ENCODE measurements at regions of chr1 and their contacts with region 1.

Region 1: DNA sequence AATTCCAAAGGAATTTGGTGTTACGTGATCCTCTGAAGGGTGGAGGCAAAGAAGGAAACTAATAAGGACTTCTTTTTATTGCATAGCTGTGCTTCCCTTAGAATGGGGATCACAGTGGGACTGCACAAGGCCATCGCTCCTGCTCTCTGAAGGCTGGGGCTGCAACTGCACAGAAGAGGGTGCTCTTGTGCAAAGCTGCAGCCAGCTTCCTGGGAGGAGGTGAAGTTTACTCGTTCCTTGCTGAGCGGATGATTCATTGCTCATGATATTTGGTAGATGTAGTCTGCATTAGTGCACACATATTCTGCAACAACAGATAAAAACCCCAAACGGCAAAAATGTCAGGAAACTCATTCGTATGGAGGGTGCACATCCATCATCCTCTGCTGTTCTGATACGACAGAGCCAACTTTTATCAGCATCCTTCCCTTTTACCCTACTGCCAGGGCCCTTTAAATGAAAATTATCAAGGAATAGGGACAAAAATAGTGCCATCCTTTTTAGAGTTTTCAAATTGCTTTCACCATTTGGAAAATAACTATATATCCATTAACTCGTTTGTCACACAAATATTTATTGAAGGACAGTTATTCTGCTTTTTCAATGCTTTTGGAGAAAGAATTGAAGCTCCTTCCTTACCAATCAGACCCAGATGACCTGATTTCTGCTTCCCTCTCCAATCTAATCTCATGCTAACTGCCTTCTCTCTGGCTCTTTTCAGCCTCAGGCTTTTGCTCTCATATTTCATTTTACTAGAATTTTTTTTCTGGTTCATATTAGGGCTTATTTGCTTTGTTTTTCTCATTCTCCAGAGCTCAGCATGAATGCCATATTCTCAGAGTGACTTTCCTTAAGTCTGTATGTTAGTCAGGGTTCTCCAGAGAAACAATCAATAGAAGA is 263.6 kb downstream of the DUSP10 start:
- DNase-seq: peak; percentile 96
- H3K4me3 Mint-ChIP-seq: no peak overlapping the region
- H3K27ac Mint-ChIP-seq: no peak overlapping the region
- H3K4me1 Mint-ChIP-seq: no peaks in the 10 kb centered on the region
- H3K27me3 Mint-ChIP-seq: no peaks in the 10 kb centered on the region
- CTCF ChIP-seq: peak; percentile 99

Region 2: DNA sequence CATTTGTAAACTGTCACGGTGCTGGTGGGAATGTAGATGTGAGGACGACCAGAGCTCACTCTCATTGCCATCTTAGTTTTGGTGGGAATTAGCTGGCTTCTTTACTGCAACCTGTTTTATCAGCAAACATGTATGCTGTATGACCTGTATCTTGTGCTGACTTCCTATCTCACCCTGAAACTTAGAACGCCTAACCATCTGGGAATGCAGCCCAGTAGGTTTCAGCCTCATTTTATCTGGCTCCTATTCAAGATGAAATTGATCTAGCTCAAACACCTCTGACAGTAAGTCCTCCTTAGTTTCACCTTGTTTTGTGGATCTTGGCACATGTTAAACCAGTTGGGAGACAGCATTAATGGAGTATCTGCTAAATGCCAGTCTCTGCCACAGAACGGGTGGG is 424.4 kb before region 1 on chr1:
- CTCF ChIA-PET with region 1: no interaction called
- POLR2A ChIA-PET with region 1: no interaction called
- intact Hi-C with region 1: no loop called
- DNase-seq: no peak
- H3K4me3 Mint-ChIP-seq: no peak overlapping the region
- H3K27ac Mint-ChIP-seq: no peak overlapping the region
- H3K4me1 Mint-ChIP-seq: no peaks in the 10 kb centered on the region
- H3K27me3 Mint-ChIP-seq: no peaks in the 10 kb centered on the region
- CTCF ChIP-seq: no peak

Region 3: GRCh38 chr1:221494670-221495069 is 16.4 kb after region 1 on chr1:
- CTCF ChIA-PET with region 1: interaction called, 22 read pairs
- POLR2A ChIA-PET with region 1: no interaction called
- intact Hi-C with region 1: no loop called
- DNase-seq: peak; percentile 71
- H3K4me3 Mint-ChIP-seq: no peak overlapping the region
- H3K27ac Mint-ChIP-seq: no peak overlapping the region
- H3K4me1 Mint-ChIP-seq: peaks cover 13% of the 10 kb centered on the region
- H3K27me3 Mint-ChIP-seq: no peaks in the 10 kb centered on the region
- CTCF ChIP-seq: no peak

Region 4: DNA sequence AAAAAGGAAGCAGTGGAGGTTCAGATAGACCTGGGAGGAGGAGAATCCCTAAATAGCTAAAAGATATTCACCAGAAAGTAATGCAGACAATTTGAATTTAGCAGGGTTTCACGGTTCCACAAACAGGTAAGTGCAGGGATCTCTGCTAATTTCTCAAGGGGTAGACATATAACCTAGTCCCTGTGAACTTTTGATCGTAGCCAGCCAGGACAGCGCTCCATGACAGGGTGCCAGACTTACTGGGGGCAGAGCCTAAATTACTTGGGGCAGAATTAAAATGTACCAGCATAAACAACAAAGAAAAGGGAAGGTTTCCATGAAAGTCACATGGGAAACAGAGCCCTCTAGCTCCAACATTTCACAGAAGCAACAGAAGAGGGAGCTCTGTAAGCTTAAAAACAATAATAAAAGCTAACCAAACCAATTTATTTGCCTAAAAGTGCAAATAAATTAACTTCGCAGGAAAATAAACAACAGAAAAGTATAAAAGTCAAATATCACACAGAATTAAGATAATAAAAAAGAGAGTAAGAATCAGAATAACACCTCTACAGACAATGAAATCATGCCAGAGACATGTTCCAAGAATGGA is 65.3 kb after region 1 on chr1:
- CTCF ChIA-PET with region 1: interaction called, 18 read pairs
- POLR2A ChIA-PET with region 1: interaction called, 3 read pairs
- intact Hi-C with region 1: loop called (anchors 1 kb)
- DNase-seq: peak; percentile 56
- H3K4me3 Mint-ChIP-seq: no peak overlapping the region
- H3K27ac Mint-ChIP-seq: peak overlapping the region; percentile 44
- H3K4me1 Mint-ChIP-seq: peaks cover 15% of the 10 kb centered on the region
- H3K27me3 Mint-ChIP-seq: no peaks in the 10 kb centered on the region
- CTCF ChIP-seq: peak; percentile 86

Region 5: DNA sequence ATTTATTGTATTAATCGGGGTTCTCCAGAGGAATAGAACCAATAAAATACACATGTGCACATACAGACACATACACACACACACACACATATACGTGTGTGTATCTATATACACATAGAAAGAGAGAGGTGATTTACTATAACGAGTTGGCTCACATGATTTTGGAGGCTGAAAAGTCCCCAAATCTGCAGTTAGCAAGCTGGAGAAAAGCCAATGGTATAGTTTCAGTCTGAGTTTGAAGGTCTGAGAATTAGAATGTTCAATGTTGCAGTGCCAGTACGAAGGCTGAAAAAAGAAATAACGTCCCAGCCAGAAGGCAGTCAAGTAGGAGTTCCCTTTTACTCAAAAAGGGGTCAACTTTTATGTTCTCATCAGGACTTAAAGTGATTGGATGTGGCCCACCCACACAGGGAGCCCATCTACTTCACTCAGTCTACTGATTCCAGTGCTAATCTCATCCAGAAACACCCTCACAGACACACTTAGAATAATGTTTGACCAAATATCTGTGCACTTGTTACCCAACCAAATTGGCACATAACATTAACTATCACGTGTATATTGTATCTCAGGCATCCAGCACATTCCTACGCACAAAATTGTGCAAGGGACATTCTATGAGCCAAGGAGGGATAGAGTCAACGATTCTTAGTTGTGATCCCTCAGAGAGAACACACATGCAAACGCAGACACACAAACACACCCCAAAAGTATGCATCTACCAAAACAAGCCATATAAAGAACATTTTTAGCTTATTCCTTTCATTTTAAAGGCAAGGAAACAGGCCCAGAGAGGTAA is 459.1 kb after region 1 on chr1:
- CTCF ChIA-PET with region 1: no interaction called
- POLR2A ChIA-PET with region 1: interaction called, 10 read pairs
- intact Hi-C with region 1: no loop called
- DNase-seq: peak; percentile 43
- H3K4me3 Mint-ChIP-seq: no peak overlapping the region
- H3K27ac Mint-ChIP-seq: no peak overlapping the region
- H3K4me1 Mint-ChIP-seq: peaks cover 8% of the 10 kb centered on the region
- H3K27me3 Mint-ChIP-seq: no peaks in the 10 kb centered on the region
- CTCF ChIP-seq: no peak

Region 6: GRCh38 chr1:222009105-222009730 is 530.9 kb after region 1 on chr1:
- CTCF ChIA-PET with region 1: interaction called, 84 read pairs
- POLR2A ChIA-PET with region 1: interaction called, 4 read pairs
- intact Hi-C with region 1: loop called (anchors 1 kb)
- DNase-seq: peak; percentile 77
- H3K4me3 Mint-ChIP-seq: no peak overlapping the region
- H3K27ac Mint-ChIP-seq: peak overlapping the region; percentile 24
- H3K4me1 Mint-ChIP-seq: no peaks in the 10 kb centered on the region
- H3K27me3 Mint-ChIP-seq: no peaks in the 10 kb centered on the region
- CTCF ChIP-seq: peak; percentile 86

Region 7: GRCh38 chr1:222171005-222171404 is 692.7 kb after region 1 on chr1:
- CTCF ChIA-PET with region 1: interaction called, 41 read pairs
- POLR2A ChIA-PET with region 1: interaction called, 6 read pairs
- intact Hi-C with region 1: loop called (anchors 1 kb)
- DNase-seq: peak; percentile 67
- H3K4me3 Mint-ChIP-seq: no peak overlapping the region
- H3K27ac Mint-ChIP-seq: no peak overlapping the region
- H3K4me1 Mint-ChIP-seq: peaks cover 16% of the 10 kb centered on the region
- H3K27me3 Mint-ChIP-seq: no peaks in the 10 kb centered on the region
- CTCF ChIP-seq: peak; percentile 86

Region 8: DNA sequence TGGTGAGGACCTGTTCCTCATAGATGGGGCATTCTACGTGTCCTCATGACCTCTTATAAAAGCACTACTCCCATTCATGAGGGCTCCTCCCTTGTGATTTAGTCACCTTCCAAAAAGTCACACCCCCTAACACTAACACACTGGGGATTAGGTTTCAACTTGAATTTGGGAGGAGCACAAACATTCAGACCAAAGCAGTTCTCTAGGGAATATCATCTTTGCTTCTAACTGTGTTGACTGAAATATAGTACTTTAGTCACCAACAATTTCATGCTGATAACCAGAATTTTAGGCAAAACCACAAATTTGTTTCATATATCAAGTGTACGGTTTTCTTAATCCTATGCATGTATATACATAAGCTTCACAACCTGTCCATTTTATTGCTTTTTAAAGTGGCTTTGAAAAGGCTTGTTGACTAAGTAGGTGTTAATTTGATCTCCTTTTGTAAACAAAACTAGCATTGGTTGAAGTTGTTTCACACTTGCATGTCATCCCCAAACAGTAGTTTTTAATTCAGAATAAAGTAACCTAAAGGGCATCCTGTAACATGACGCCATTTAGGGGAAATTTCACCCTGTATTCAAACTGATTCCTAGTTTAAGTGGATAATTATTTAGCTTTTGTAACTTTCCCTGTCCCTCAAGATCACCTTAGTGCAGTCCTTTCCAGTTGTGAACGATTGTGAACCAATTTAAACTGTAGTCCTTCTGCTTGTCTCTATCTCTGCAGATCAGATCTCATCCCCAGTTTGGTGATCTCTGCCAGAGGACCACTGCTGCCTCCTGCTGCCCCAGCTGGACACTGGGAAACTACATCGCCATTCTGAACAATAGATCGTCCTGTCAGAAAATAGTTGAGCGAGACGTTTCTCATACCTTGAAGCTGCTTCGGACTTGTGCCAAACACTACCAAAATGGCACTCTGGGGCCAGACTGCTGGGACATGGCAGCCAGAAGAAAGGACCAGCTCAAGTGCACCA is 1523.6 kb after region 1 on chr1:
- CTCF ChIA-PET with region 1: no interaction called
- POLR2A ChIA-PET with region 1: no interaction called
- intact Hi-C with region 1: no loop called
- DNase-seq: peak; percentile 86
- H3K4me3 Mint-ChIP-seq: no peak overlapping the region
- H3K27ac Mint-ChIP-seq: no peak overlapping the region
- H3K4me1 Mint-ChIP-seq: peaks cover 11% of the 10 kb centered on the region
- H3K27me3 Mint-ChIP-seq: peaks cover 6% of the 10 kb centered on the region
- CTCF ChIP-seq: no peak

Measured in MCF 10A (cell line).